GM18951 (cell line): ENCODE measurements at regions of chr5 and their contacts with region 1.

Region 1: GRCh38 chr5:112146323-112147226 is 272.5 kb downstream of the EPB41L4A start:
- POLR2A ChIP-seq: no peak

Region 2: GRCh38 chr5:111169269-111169668 is 977.3 kb before region 1 on chr5:
- in situ Hi-C with region 1: loop called (anchors 5 kb)
- POLR2A ChIP-seq: no peak

Region 3: GRCh38 chr5:111550279-111551020 is 596.1 kb before region 1 on chr5:
- in situ Hi-C with region 1: loop called (anchors 5 kb)
- POLR2A ChIP-seq: no peak

Region 4: DNA sequence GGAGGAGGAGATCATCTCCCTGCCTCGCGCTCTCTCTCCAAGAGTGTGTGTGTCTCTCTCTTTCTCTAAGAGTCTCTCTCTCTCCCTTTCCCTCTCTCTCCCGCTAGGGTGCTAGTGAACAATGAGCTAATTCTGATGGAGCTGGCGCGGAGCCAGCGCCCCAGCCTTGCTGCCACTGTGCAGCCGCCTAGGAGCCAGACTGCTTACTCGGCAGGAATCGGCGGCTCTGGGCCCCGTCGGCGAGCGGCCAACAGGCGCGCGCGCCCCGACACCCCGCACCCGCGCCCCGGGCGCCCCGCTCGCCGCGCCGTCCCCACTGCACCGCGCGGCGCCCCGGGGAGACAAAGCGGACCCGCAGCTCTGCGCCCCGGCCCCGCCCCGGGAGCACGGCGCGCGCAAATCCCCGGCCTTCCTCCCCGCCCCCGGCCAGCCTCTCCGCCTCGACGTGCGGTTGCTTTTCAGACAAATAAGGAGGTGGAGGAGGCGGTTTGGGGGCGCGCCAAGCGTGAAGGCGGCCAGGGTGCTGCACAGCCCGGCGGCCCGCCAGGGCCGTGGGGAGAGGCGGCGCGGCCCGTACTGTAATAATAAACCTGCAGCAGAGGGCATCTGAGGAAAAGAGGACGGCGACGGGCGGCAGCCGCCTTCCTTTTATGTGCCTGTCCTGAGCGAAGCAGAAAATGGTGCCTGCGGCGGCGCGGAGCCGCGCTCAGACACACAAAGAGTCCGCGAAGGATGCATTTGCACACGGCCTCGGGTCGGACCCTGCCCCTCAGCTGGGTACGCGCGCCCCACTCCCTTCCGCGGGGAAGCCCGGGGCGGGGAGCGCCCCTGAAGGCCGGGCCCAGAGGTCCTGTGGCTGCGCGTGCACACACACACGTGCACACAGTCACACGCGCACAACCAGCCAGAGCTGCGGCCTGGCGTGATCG is 389.0 kb before region 1 on chr5:
- in situ Hi-C with region 1: loop called (anchors 25 kb)
- POLR2A ChIP-seq: peak; percentile 81